ENCODE measurements at regions of chr18 and their contacts with region 1.

Region 1: DNA sequence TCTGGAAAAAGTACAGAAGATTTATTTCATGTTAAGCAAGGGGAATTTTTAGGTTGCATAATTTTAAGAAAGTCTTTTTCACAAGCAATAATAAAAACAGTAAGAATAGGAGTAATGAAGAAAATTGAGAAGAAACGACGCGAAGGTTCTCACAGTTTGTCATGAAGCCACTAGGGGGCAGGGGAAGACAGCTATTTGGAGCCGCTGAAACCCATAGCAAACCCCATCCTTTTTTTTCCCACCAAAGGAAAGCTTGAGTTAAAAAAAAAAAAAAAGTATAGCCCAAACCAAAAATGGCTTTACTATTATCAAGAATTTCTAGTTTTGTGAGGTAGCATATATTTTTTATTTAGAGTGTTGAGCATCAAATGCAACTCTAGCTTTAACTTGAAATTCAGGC is 300.9 kb downstream of the PHLPP1 start:
- DNase-seq: peak; percentile 67

Region 2: DNA sequence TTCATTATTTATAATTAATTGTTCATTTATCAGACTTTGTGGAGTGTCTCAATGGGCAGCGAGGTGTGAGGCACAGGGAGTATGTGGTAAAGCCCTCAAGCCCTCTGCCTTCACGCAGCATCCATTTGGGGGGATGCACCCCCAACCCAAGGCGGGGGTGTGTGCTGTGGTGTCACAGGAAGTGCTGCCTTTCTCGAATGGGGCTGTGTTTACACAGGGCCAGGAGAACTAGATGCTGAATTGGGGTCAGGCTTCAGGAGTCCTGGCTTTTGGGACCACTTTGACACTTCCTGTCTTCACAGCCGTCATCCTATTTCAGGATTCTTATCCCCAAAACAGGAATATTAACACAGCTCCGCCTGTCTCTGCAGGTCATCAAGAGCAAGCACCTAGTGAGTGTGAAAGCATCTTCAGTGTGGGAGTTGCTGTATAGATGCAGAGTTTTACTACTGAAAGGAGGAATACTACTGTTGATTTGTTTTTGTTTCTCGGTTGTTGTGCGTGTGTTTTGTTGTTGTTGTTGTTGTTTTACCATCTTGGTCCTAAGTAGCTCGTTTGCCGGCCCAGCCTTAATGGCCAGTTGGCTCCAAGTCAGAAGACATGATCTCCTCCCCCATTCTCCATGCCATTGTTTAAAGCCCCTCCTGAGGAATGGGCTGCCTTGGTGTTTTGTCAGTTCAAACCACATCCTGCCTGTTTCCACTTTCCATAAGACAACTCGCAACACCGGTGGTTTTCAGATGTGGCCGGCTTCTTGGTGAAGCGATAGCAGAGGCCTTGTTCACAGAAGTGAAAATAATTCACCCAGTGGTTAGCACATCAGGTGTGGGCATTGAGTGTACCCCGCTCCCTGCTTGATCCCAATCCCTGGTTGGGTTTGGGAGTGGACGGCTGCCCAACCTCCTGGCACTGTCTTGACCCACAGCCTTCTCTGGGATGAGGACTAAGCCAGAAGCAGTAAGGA is 82.0 kb after region 1 on chr18:
- in situ Hi-C with region 1: no loop called
- DNase-seq: no peak

Region 3: DNA sequence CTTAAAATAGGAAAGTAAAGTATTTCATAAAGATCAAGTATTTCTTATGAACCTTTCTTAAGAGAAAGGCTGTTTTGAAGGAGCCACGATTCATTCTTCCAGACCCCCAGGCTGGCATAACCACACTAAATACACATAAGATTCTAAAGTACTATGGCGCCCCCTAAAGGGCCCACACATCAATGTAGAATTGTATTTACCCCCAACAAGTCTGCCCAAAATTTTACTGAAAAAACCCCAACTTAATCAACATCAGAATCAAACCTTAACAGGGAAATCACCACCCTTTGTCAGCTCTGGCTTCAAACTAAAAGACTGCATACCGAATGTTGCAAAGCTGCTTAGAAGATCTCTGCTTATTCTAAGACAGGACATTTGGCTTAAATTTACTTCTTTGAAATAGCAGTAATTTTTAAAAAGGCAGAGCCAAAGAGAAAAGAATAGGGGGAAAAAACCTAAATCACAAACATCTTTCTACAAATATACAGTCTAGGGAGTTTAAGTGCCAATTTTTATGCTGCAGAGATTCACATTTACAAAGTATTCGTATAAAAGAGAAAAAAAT is 323.7 kb after region 1 on chr18:
- in situ Hi-C with region 1: loop called (anchors 10 kb)
- DNase-seq: peak; percentile 46

Measured in G401 (cell line).